Dorsolateral prefrontal cortex (tissue), 120 donors: ENCODE measurements at regions of chr9 and their contacts with region 1.

Region 1: DNA sequence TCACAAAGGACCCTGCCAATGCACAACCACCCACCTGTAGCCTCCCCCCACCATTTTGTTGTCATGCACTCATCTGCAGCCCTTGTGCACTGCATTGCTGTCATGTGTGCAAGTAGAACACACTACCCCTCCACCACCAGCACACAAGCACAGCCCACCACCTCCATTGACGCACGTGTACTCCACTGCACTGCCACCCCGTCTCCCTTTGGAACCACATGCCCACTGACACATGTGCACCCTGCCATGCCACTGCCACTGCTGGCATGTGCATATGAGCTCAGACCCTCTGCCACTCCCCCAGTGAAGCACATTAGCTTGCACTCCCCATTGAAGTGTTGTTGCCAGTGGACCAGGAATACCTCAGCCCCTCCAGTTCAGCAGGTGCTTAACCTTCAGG is 530.3 kb upstream of the ACO1 start:
- DNase-seq: no peak
- H3K4me3 ChIP-seq: no peak overlapping the region
- H3K27ac ChIP-seq: no peak overlapping the region
- H3K27me3 ChIP-seq: no peaks in the 10 kb centered on the region
- CTCF ChIP-seq: no peak

Region 2: GRCh38 chr9:31799953-31800609 is 54.1 kb before region 1 on chr9:
- intact Hi-C with region 1: loop called in 1 of 2 experiments (anchors 10 kb)
- DNase-seq: no peak
- H3K4me3 ChIP-seq: no peak overlapping the region
- H3K27ac ChIP-seq: no peak overlapping the region
- H3K27me3 ChIP-seq: no peaks in the 10 kb centered on the region
- CTCF ChIP-seq: peak in 30 of 56 donors; percentile 7 to 45 (median 26)